Heart right ventricle (tissue), 16 donors: ENCODE measurements at regions of chr16 and their contacts with region 1.

Region 1: GRCh38 chr16:3983081-3983520 is 102.6 kb upstream of the CREBBP start:
- DNase-seq: peak; percentile 65 to 73
- ATAC-seq: peak; percentile 72 to 88 (median 83)
- H3K4me3 ChIP-seq: no peak overlapping the region
- H3K27ac ChIP-seq: no peak overlapping the region
- H3K4me1 ChIP-seq: peaks cover 0 to 11% (median 0%) of the 10 kb centered on the region in 9 donors
- H3K27me3 ChIP-seq: no peaks in the 10 kb centered on the region
- CTCF ChIP-seq: peak; percentile 29 to 85 (median 74)

Region 2: GRCh38 chr16:4176612-4177417 is 193.7 kb after region 1 on chr16:
- intact Hi-C with region 1: loop called in 3 of 10 experiments (anchors 5 to 10 kb)
- DNase-seq: no peak
- ATAC-seq: no peak
- H3K4me3 ChIP-seq: no peak overlapping the region
- H3K27ac ChIP-seq: no peak overlapping the region
- H3K4me1 ChIP-seq: no peaks in the 10 kb centered on the region
- H3K27me3 ChIP-seq: peaks cover 0 to 14% (median 0%) of the 10 kb centered on the region in 7 donors
- CTCF ChIP-seq: no peak

Region 3: GRCh38 chr16:4183237-4184036 is 200.3 kb after region 1 on chr16:
- intact Hi-C with region 1: loop called in 2 of 10 experiments (anchors 10 kb)
- DNase-seq: peak; percentile 91 to 97
- ATAC-seq: peak; percentile 95 to 98 (median 96)
- H3K4me3 ChIP-seq: peak overlapping the region; percentile 62 to 84 (median 72)
- H3K27ac ChIP-seq: peak overlapping the region; percentile 79 to 100 (median 94)
- H3K4me1 ChIP-seq: peaks cover 3 to 20% (median 8%) of the 10 kb centered on the region in 9 donors
- H3K27me3 ChIP-seq: peaks cover 0 to 13% (median 0%) of the 10 kb centered on the region in 7 donors
- CTCF ChIP-seq: peak in 4 of 9 donors; percentile 11 to 45 (median 42)

Region 4: GRCh38 chr16:4200000-4200780 is 217.1 kb after region 1 on chr16:
- intact Hi-C with region 1: loop called in 1 of 10 experiments (anchors 10 kb)
- DNase-seq: peak; percentile 66 to 69
- ATAC-seq: peak; percentile 45 to 86 (median 78)
- H3K4me3 ChIP-seq: no peak overlapping the region
- H3K27ac ChIP-seq: peak overlapping the region in 2 of 10 donors; percentile 3 to 9
- H3K4me1 ChIP-seq: peaks cover 0 to 19% (median 8%) of the 10 kb centered on the region in 9 donors
- H3K27me3 ChIP-seq: no peaks in the 10 kb centered on the region
- CTCF ChIP-seq: peak; percentile 29 to 82 (median 72)

Region 5: GRCh38 chr16:4244254-4245076 is 261.4 kb after region 1 on chr16:
- intact Hi-C with region 1: loop called in 1 of 10 experiments (anchors 10 kb)
- DNase-seq: no peak
- ATAC-seq: no peak
- H3K4me3 ChIP-seq: no peak overlapping the region
- H3K27ac ChIP-seq: no peak overlapping the region
- H3K4me1 ChIP-seq: peaks cover 0 to 28% (median 0%) of the 10 kb centered on the region in 9 donors
- H3K27me3 ChIP-seq: no peaks in the 10 kb centered on the region
- CTCF ChIP-seq: no peak